K562 (cell line): ENCODE measurements at regions of chr12 and their contacts with region 1.

Region 1: GRCh38 chr12:117874842-117875434 is 93.9 kb downstream of the KSR2 start:
- DNase-seq: peak; percentile 67 to 76 (median 74)
- ATAC-seq: peak; percentile 92
- H3K4me3 ChIP-seq: no peak overlapping the region
- H3K27ac ChIP-seq: no peak overlapping the region
- H3K4me1 ChIP-seq: peaks cover 0 to 4% of the 10 kb centered on the region in 2 experiments; a peak in 1 of 5 replicates
- H3K27me3 ChIP-seq: peaks cover 17 to 32% of the 10 kb centered on the region in 2 experiments; a peak in 4 of 5 replicates
- CTCF ChIP-seq: peak; percentile 79 to 87 (median 85)
- EP300 ChIP-seq: no peak
- POLR2A ChIP-seq: no peak
- RAD21 ChIP-seq: peak; percentile 60 to 87

Region 2: DNA sequence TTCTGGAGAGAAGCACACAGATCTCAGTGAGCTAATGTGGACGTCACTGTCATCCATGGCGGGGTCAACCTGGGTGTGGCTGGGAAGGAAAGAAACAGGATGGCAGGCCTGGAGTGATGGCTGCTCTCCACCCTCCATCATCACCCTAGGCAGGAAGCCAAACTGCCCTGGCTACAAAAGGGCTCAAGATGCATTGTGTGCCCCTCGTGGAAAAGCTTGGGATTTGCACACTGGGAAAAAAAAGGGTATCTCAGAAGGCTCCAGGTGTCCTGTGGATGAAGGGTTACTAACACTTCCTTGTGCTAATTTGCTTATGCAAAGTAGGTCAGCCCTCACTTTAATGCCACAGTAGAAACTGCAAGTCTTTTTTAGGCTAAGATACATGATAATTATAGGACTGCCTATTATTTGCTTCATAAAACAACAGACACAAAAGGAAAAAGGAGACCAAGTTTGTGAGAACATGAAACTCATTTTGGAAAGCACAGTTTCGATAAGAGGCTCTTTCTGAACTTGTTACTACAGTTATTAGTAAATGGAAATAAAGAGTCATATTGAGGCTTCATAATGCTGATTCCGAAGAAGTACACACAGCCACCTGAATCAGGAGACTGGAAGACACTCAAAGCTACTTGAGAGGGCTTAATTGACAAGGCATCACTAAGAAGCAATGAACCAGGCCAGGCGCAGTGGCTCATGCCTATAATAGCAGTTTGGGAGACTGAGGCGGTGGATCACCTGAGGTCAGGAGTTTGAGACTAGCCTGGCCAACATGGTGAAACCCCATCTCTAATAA is 160.5 kb after region 1 on chr12:
- CTCF ChIA-PET with region 1: interaction called, 23 read pairs
- POLR2A ChIA-PET with region 1: no interaction called
- in situ Hi-C with region 1: no loop called
- intact Hi-C with region 1: loop called (anchors 2 kb)
- DNase-seq: no peak
- ATAC-seq: peak; percentile 16
- H3K4me3 ChIP-seq: no peak overlapping the region
- H3K27ac ChIP-seq: no peak overlapping the region
- H3K4me1 ChIP-seq: no peaks in the 10 kb centered on the region; a peak in 1 of 5 replicates
- H3K27me3 ChIP-seq: no peaks in the 10 kb centered on the region
- CTCF ChIP-seq: no peak
- EP300 ChIP-seq: no peak
- POLR2A ChIP-seq: peak; percentile 53
- RAD21 ChIP-seq: no peak

Region 3: GRCh38 chr12:118189741-118190191 is 314.8 kb after region 1 on chr12:
- CTCF ChIA-PET with region 1: no interaction called
- POLR2A ChIA-PET with region 1: no interaction called
- in situ Hi-C with region 1: no loop called
- intact Hi-C with region 1: loop called (anchors 10 kb)
- DNase-seq: no peak
- ATAC-seq: no peak
- H3K4me3 ChIP-seq: no peak overlapping the region
- H3K27ac ChIP-seq: no peak overlapping the region
- H3K4me1 ChIP-seq: peaks cover 0 to 10% of the 10 kb centered on the region in 2 experiments; a peak in 3 of 5 replicates
- H3K27me3 ChIP-seq: no peaks in the 10 kb centered on the region
- CTCF ChIP-seq: no peak
- EP300 ChIP-seq: no peak
- POLR2A ChIP-seq: no peak
- RAD21 ChIP-seq: no peak